Heart right ventricle (tissue), 16 donors: ENCODE measurements at regions of chr9 and their contacts with region 1.

Region 1: DNA sequence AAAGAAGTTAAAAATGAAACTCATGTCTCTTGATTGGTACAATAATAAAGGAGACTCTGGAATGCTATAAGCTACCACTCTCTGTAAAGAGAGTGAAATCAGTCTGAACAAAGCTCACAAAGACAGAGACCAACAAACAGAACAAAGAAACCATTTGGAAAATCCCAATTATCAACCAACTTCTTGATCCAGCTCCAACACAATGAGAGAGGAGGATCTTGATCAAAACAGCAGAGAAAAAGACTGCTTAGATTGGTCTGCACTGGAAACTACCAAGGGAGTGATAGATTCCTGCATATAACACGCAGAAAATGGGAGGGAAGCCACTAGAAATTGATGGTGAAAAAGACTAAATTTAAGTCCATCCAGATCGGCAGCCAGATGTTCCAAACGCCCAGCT is 23.1 kb upstream of the RNF38 start:
- DNase-seq: no peak
- ATAC-seq: no peak
- H3K4me3 ChIP-seq: no peak overlapping the region
- H3K27ac ChIP-seq: no peak overlapping the region
- H3K4me1 ChIP-seq: peaks cover 0 to 13% (median 4%) of the 10 kb centered on the region in 9 donors
- H3K27me3 ChIP-seq: no peaks in the 10 kb centered on the region
- CTCF ChIP-seq: no peak

Region 2: DNA sequence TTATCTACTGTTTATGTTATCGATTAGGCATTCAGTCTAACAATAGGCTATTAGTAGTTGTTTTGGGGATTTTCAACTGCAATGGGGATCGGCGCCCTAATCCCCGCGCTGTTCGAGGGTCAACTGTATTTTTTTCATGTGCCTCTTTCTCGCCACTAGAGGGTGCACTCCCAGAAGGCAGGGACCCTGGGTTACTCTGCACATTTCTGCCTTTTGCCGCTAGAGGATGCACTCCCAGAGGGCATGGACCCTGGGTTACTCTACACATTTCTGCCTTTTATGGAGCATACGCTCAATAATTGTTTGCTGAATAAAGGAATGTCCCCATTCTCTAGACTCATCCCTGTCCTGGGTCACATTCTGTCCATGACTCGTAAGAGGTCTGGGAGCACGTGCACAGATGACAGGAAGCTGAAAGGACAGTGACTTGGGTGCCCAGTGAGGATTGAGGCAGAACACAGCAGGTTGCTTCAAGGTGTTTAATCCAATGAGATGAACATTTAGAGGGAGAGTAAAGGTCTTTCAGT is 414.4 kb before region 1 on chr9:
- intact Hi-C with region 1: no loop called
- DNase-seq: peak; percentile 26 to 34
- ATAC-seq: peak in 7 of 8 donors; percentile 64 to 87 (median 73)
- H3K4me3 ChIP-seq: no peak overlapping the region
- H3K27ac ChIP-seq: no peak overlapping the region
- H3K4me1 ChIP-seq: peaks cover 0 to 6% (median 0%) of the 10 kb centered on the region in 9 donors
- H3K27me3 ChIP-seq: peaks cover 0 to 6% (median 0%) of the 10 kb centered on the region in 7 donors
- CTCF ChIP-seq: peak; percentile 87 to 99 (median 95)

Region 3: GRCh38 chr9:36364577-36364976 is 58.6 kb before region 1 on chr9:
- intact Hi-C with region 1: loop called in 1 of 10 experiments (anchors 10 kb)
- DNase-seq: no peak
- ATAC-seq: no peak
- H3K4me3 ChIP-seq: no peak overlapping the region
- H3K27ac ChIP-seq: no peak overlapping the region
- H3K4me1 ChIP-seq: no peaks in the 10 kb centered on the region
- H3K27me3 ChIP-seq: no peaks in the 10 kb centered on the region
- CTCF ChIP-seq: no peak